ENCODE measurements at regions of chr2 and their contacts with region 1.

Region 1: DNA sequence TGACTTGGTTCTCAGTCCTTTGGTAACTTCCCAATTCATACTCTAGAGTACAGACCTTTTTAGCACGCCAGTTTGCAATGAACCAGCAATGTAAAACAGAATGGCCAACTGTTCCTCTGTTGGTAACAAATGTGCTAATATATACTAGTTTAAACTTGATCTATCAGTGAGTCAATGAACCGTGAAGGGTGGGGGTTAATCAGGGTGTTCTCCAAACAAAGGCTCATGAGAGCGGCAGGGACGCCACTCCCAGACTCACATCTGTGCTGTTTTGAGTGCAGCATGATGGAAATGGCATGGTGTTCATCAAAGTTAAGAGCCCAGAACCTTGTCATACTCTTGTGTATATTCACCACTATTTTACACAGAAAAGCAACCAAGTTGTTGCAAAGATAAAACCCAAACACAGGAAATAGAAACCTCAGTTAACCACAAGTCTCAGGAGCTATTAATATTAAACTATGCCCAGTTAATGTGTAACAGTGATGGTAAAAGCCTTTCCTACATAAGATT is 70.3 kb downstream of the CERKL start:
- DNase-seq: no peak
- H3K4me3 Mint-ChIP-seq: no peak overlapping the region
- H3K27ac Mint-ChIP-seq: no peak overlapping the region
- H3K4me1 Mint-ChIP-seq: peaks cover 16% of the 10 kb centered on the region
- H3K27me3 Mint-ChIP-seq: peaks cover 39% of the 10 kb centered on the region

Region 2: DNA sequence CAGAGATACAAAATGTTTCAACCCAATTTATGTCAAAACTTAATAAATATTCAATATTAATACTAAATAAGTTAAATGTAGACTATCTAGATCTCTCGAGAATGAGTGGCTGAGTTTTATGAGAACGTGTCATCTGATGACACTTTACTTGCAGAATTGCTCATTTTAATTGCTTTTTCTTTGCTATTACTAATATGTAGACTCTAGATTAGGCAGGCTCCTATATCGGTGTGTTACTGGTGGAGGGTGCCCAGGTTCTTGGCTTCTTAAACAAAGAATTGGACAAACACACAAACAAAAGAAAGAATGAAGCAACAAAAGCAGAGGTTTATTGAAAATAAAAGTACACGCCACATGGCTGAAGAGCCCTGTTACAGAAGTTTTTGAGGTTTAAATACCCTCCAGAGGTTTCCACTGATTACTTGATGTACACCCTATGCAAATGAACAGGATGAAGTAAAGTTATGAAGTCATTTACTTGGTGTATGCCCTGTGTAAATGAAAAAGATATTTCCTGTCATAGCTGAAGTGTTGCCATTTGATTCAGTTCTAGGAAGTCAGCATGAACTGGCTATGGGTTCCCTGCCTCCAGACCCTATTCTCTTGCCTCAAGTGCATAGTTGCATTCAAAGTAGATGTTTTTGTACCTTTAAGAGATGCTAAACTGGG is 252.3 kb before region 1 on chr2:
- CTCF ChIA-PET with region 1: no interaction called
- POLR2A ChIA-PET with region 1: no interaction called
- DNase-seq: no peak
- H3K4me3 Mint-ChIP-seq: no peak overlapping the region
- H3K27ac Mint-ChIP-seq: no peak overlapping the region
- H3K4me1 Mint-ChIP-seq: peaks cover 10% of the 10 kb centered on the region
- H3K27me3 Mint-ChIP-seq: no peaks in the 10 kb centered on the region

Region 3: DNA sequence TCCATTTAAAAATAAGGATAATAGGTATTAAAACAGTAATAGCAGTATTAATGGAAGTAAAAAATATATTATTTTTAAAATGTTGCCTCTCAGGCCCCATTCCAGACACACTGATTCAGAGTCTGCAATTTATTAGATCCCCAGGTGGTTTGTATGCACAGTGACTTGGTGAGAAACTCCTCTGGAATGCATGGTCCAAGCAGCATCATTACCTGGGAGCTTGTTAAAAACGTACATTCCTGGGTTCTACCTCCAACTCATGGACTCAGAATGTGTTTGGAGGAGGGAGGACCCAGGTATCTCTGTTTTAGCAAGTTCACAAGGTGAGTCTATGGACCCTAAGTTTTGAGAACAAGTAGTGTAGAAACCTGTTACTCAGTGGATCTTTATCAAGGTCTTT is 33.8 kb before region 1 on chr2:
- CTCF ChIA-PET with region 1: no interaction called
- POLR2A ChIA-PET with region 1: no interaction called
- DNase-seq: no peak
- H3K4me3 Mint-ChIP-seq: no peak overlapping the region
- H3K27ac Mint-ChIP-seq: no peak overlapping the region
- H3K4me1 Mint-ChIP-seq: no peaks in the 10 kb centered on the region
- H3K27me3 Mint-ChIP-seq: no peaks in the 10 kb centered on the region

Region 4: DNA sequence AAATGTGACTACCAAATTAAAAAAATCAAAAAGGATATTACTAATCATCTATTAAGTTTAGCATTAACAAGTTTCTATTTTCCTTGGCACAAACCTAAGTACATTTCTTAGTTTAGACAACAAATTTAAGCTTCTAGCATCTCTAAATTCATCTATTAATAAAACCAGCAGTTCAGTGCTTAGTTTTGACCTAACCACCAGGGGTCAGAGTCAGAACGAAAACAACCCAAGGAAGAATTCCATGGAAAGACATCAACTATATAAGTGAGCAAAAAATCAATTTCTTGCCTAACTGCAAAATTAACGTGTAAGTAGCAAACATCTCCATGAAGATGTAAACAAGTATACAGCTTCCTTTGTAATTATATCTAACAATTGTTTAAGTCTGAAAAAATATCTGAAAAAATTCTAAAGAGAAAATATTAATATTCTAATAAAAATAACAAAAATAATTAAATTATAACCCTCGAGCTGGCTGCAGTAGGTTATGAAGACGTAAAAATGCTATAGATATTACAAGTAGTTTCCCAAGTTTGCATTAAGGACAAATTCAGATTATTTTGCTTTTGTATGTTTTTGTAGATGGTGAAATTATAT is 13.4 kb before region 1 on chr2:
- CTCF ChIA-PET with region 1: interaction called, 10 read pairs
- POLR2A ChIA-PET with region 1: no interaction called
- DNase-seq: no peak
- H3K4me3 Mint-ChIP-seq: no peak overlapping the region
- H3K27ac Mint-ChIP-seq: no peak overlapping the region
- H3K4me1 Mint-ChIP-seq: no peaks in the 10 kb centered on the region
- H3K27me3 Mint-ChIP-seq: peaks cover 13% of the 10 kb centered on the region

Region 5: DNA sequence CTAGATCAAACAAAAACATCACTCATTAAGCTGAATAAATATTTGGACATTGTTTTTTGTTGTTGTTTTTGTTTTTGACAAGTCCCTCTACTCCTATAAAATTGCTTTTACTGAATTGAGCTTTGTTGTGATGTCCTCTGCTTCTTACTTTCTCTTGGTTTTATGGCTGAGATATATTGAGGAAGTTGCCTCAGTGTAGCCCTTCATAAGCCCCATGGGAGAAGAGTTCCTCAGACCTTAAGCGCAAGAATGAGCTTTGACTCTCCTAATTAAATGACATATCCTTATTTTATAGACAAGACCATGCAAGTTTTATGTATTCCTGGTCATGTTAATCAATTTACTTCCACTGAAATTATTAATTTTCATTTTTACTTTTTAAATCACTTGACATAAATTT is 15.4 kb after region 1 on chr2:
- CTCF ChIA-PET with region 1: no interaction called
- POLR2A ChIA-PET with region 1: no interaction called
- DNase-seq: no peak
- H3K4me3 Mint-ChIP-seq: no peak overlapping the region
- H3K27ac Mint-ChIP-seq: no peak overlapping the region
- H3K4me1 Mint-ChIP-seq: no peaks in the 10 kb centered on the region
- H3K27me3 Mint-ChIP-seq: peaks cover 12% of the 10 kb centered on the region